Heart right ventricle (tissue), 16 donors: ENCODE measurements at regions of chr15 and their contacts with region 1.

Region 1: GRCh38 chr15:78739996-78740903 is 71.0 kb downstream of the ADAMTS7 start:
- DNase-seq: no peak
- ATAC-seq: peak in 7 of 8 donors; percentile 38 to 78 (median 55)
- H3K4me3 ChIP-seq: no peak overlapping the region
- H3K27ac ChIP-seq: no peak overlapping the region
- H3K4me1 ChIP-seq: peaks cover 0 to 6% (median 0%) of the 10 kb centered on the region in 9 donors
- H3K27me3 ChIP-seq: no peaks in the 10 kb centered on the region
- CTCF ChIP-seq: peak in 7 of 9 donors; percentile 20 to 54 (median 44)

Region 2: DNA sequence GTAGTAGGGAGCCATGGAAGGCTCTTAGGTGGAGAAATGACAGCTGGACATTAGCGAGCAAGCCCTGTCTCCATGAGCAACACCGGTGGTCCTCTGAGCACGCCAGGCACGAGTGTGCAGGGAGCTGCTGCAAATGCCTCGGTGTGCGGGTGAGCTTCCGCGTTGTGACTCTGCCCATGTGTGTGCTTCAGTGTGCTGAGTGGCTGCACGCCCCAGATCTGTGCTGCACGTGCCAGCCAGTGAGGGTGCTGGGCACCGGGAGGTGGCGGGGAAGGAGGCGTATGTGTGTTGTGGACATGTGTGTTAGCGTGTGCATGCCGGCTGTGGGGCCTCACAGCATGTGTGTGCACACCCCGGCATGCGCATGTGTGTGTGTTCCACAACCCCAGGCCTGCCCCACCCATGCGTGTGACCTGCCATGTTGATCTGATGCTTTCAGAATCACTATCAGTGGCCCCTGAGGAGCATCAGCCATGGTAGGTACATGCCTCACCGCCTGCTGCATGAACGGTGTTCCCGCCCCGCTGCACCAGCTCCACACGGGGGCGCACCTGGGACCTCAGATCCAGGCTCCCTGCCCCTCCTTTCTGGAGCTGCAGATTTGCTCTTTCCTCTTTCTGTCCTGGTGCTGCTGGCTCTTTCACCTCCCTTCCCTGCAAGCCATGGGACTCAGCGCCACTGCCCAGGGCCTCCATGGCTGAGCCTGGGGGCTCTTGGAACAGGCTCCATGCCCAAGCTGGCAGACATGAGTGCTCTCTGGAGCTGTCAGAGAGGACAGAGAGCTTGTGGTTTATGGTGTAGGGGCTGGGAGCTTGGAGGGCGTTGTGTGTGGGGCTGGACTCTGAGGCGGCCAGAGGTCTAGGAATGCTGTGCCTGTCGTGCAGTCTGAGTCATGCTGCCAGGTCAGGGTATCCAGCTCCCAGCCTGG is 832.2 kb before region 1 on chr15:
- intact Hi-C with region 1: loop called in 1 of 10 experiments (anchors 5 kb)
- DNase-seq: no peak
- ATAC-seq: peak in 5 of 8 donors; percentile 27 to 71 (median 54)
- H3K4me3 ChIP-seq: no peak overlapping the region
- H3K27ac ChIP-seq: peak overlapping the region in 1 of 10 donors; percentile 12
- H3K4me1 ChIP-seq: peaks cover 0 to 5% (median 0%) of the 10 kb centered on the region in 9 donors
- H3K27me3 ChIP-seq: no peaks in the 10 kb centered on the region
- CTCF ChIP-seq: peak in 6 of 9 donors; percentile 21 to 56 (median 38)

Region 3: GRCh38 chr15:77944002-77944867 is 796.0 kb before region 1 on chr15:
- intact Hi-C with region 1: loop called in 1 of 10 experiments (anchors 10 kb)
- DNase-seq: peak; percentile 86 to 92
- ATAC-seq: peak; percentile 87 to 96 (median 95)
- H3K4me3 ChIP-seq: peak overlapping the region; percentile 46 to 66 (median 58)
- H3K27ac ChIP-seq: peak overlapping the region in 9 of 10 donors; percentile 70 to 95 (median 83)
- H3K4me1 ChIP-seq: peaks cover 0 to 14% (median 6%) of the 10 kb centered on the region in 9 donors
- H3K27me3 ChIP-seq: no peaks in the 10 kb centered on the region
- CTCF ChIP-seq: no peak

Region 4: DNA sequence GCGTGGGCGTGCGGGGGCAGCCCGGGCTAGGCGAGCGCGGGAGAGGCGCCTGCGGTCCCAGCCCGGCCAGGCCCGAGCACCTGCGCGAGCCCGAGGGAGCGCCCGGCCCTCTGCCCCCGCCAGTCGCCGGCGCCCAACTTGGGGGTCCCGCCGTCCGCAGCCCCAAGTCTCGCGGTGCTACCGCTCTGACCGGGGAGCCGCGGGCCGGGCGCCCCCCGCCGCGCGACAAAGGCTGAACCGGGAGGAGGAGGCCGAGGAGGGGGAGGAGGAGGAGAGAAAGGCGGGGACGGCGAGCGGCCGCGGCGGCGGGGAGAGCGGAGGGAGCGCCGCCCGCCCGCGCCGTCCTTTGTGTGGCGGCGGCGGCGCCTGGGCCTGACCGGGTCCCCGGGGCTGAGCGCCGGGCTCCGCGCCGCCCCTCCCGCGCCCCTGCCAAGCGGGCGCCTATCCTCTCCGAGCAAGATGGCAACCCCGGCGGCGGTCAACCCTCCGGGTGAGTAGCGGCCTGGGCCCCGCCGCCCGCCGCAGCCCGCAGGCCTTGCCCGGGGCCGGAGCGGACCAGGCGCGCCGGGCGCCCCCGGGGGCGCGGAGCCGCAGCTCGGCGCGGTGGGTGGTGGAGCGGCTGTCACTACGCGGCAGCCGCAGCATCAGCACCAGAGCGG is 1663.9 kb after region 1 on chr15 and contains the start of gene ARNT2:
- intact Hi-C with region 1: loop called in 1 of 10 experiments (anchors 5 kb)
- DNase-seq: peak; percentile 16 to 30
- ATAC-seq: peak; percentile 30 to 72 (median 48)
- H3K4me3 ChIP-seq: peak within 1 kb of the TSS in 9 of 10 donors; percentile 31 to 60 (median 49)
- H3K27ac ChIP-seq: peak within 1 kb of the TSS in 1 of 10 donors; percentile 28
- H3K4me1 ChIP-seq: peaks cover 0 to 12% (median 7%) of the 10 kb centered on the region in 9 donors
- H3K27me3 ChIP-seq: peaks cover 0 to 72% (median 20%) of the 10 kb centered on the region in 7 donors
- CTCF ChIP-seq: no peak
- total RNA-seq, gene ARNT2: 1.7 to 6.7 (median 4.5) TPM